A673 (cell line): ENCODE measurements at regions of chr7 and their contacts with region 1.

Region 1: GRCh38 chr7:8290645-8291314 is 28.8 kb upstream of the ICA1 start:
- DNase-seq: peak; percentile 14
- H3K4me3 ChIP-seq: no peak overlapping the region
- H3K27ac ChIP-seq: no peak overlapping the region
- H3K4me1 ChIP-seq: peaks cover 17% of the 10 kb centered on the region
- H3K27me3 ChIP-seq: peaks cover 78% of the 10 kb centered on the region
- CTCF ChIP-seq: no peak

Region 2: DNA sequence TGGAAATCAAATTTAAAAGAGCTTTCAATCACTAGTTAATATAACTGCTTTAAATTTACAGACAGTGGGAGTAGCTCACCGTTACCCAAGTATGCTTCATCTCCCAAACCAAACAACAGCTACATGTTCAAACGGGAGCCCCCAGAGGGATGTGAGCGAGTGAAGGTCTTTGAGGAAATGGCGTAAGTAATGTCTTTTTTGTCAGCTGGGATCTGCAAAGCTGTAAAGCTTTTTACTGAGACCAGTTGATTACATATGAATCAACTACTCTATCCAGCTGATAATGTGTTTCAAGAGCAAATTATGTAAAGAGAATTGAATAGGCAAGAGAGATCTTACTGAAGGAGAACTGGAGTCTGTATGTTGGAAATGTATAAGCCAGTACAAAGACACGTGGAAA is 205.9 kb before region 1 on chr7:
- CTCF ChIA-PET with region 1: no interaction called
- POLR2A ChIA-PET with region 1: no interaction called
- intact Hi-C with region 1: no loop called
- DNase-seq: no peak
- H3K4me3 ChIP-seq: no peak overlapping the region
- H3K27ac ChIP-seq: no peak overlapping the region
- H3K4me1 ChIP-seq: no peaks in the 10 kb centered on the region
- H3K27me3 ChIP-seq: no peaks in the 10 kb centered on the region
- CTCF ChIP-seq: no peak

Region 3: DNA sequence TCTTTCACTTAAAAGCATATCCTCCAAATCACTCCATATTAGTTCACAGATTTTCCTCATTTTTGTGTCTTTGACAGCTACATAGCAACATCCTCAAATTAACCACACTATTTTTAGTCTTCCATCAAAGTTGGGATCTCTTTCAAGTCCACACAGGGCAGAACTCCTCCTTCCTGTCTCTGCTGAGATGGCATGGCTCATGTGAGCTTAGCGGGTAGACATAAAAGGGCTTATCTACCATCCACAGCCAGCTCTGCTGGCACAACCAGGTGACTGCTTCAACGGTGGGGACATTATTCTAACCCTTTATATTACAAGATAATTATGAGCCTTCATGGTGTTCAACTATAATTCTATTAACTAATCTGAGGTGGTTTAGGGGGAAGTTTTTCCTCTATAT is 64.3 kb before region 1 on chr7:
- CTCF ChIA-PET with region 1: no interaction called
- POLR2A ChIA-PET with region 1: no interaction called
- intact Hi-C with region 1: loop called (anchors 5 kb)
- DNase-seq: no peak
- H3K4me3 ChIP-seq: no peak overlapping the region
- H3K27ac ChIP-seq: no peak overlapping the region
- H3K4me1 ChIP-seq: no peaks in the 10 kb centered on the region
- H3K27me3 ChIP-seq: peaks cover 47% of the 10 kb centered on the region
- CTCF ChIP-seq: no peak